ENCODE measurements at regions of chr20 and their contacts with region 1.

Region 1: DNA sequence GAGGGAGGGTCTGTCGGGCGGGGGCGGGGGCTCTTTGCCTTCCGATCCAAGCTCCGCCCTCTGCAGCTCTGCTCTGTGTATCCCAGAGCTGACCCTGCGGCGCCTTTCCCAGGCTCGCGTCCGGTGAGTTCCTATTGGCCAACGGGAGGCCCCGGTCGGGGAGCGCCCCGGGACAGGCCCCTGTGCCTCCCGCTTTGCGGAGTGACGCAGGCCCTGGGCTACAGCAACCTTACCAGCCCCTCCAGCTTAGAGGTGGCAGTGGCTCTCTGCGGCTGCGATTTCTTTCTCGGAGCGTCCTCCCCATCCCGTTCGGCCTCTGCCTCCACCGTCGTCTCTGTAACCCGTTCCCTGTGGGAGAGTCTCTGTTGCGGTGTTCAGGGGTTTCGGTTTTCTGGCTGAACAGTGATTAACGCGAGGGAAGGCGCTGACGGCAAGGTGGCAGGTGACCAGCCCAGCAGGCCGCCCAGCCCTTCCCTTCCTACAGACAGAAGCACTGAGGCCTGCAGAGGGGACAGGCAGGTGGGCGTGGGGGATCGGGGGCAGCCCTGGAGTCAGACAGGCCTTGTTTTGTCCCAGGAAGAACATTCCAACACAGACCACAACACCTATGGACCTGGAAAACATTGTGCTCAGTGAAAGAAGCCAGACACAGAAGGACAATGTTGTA is 18.1 kb upstream of the CEBPB start:
- DNase-seq: peak; percentile 91 to 95
- ATAC-seq: peak; percentile 92 to 97
- H3K4me3 ChIP-seq: peak overlapping the region; percentile 49
- H3K27ac ChIP-seq: peak overlapping the region; percentile 82 to 89
- H3K4me1 ChIP-seq: peaks cover 26% of the 10 kb centered on the region
- CTCF ChIP-seq: no peak
- EP300 ChIP-seq: no peak
- POLR2A ChIP-seq: peak; percentile 50
- RAD21 ChIP-seq: no peak

Region 2: DNA sequence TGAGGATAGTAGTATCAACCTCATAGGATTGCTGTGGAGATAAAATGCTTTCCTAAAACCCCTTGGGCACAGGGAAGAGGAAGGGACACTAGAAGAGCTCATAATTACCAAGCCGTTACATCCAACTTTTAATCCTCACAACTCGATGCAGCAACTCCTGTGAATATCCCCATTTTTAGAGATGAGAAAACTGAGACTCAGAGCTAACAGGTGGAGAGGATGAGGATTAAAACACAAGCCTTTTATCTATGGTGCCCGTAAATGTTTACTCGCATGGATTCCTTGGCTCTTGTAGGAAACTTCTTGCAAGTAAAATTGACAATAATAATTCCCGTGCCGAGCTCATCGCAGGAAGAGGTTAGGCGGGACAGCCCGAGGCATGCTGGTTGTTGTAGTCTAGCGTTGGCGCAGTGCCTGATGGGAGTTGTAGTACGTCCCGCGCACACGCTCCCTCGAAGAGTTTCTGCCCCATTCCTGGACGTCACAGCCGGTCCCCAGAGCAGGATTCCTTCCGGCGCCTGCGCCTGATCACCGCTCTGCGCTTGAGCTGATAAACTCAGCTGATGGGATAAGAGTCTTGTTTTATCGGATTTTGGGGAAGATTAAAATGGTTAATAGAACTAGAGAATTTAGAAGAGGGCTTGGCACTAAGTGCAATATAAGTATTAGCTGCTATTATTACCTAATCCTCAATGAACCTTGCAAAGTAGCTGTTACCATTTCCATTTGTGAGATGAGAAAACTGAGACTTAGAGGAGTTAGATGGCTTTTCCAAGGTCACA is 56.7 kb before region 1 on chr20:
- CTCF ChIA-PET with region 1: interaction called, 1,085 read pairs
- POLR2A ChIA-PET with region 1: interaction called, 11 read pairs
- DNase-seq: peak; percentile 92 to 96
- ATAC-seq: peak; percentile 82 to 87
- H3K4me3 ChIP-seq: peak overlapping the region; percentile 54
- H3K27ac ChIP-seq: peak overlapping the region; percentile 69 to 84
- H3K4me1 ChIP-seq: peaks cover 31% of the 10 kb centered on the region
- CTCF ChIP-seq: no peak
- EP300 ChIP-seq: no peak
- POLR2A ChIP-seq: peak; percentile 61
- RAD21 ChIP-seq: no peak

Region 3: DNA sequence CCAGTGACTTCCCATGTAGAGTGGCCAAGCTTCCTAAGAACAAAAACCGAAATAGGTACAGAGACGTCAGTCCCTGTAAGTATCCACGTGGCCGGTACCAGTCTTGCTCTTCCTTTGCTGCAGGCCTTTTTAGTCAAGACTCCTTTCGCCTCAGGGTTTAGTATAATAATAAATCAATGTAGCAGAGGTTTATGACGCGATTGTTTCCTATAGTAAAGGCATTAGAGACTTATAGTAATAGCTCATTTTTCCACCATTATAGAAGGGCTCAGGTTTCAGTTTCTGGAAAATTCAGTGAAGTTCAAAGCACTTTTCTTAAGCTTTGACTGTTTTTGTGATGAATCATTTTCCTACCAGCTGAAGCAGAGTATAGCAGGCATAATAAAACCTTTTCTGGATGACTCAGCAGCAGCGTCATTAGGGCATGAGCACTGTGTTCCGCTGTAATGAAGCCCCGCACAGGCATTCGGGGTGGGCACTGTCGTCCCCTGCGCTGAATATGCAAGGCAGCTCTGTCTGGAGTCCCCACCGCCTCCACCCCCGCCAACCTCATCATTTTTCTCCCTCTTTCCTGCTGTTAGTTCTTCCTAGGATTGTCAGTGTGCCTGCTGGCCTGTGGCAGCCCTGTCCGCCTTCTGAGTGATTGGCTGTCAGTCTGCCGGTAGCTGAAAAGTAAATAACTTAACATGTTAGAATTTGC is 389.0 kb after region 1 on chr20:
- CTCF ChIA-PET with region 1: no interaction called
- POLR2A ChIA-PET with region 1: no interaction called
- DNase-seq: peak; percentile 70 to 75
- ATAC-seq: peak; percentile 88 to 89
- H3K4me3 ChIP-seq: no peak overlapping the region
- H3K27ac ChIP-seq: peak overlapping the region; percentile 63 to 87
- H3K4me1 ChIP-seq: peaks cover 60% of the 10 kb centered on the region
- CTCF ChIP-seq: no peak
- EP300 ChIP-seq: peak in 1 of 2 experiments; percentile 27; a peak in 1 of 5 replicates
- POLR2A ChIP-seq: no peak
- RAD21 ChIP-seq: no peak